Adrenal gland (tissue), 19 donors: ENCODE measurements at regions of chr7 and their contacts with region 1.

Region 1: GRCh38 chr7:70154521-70155180 is 556.4 kb downstream of the AUTS2 start:
- DNase-seq: no peak
- H3K4me3 ChIP-seq: no peak overlapping the region
- H3K27ac ChIP-seq: no peak overlapping the region
- H3K4me1 ChIP-seq: no peaks in the 10 kb centered on the region
- H3K27me3 ChIP-seq: no peaks in the 10 kb centered on the region
- CTCF ChIP-seq: no peak
- POLR2A ChIP-seq: no peak

Region 2: DNA sequence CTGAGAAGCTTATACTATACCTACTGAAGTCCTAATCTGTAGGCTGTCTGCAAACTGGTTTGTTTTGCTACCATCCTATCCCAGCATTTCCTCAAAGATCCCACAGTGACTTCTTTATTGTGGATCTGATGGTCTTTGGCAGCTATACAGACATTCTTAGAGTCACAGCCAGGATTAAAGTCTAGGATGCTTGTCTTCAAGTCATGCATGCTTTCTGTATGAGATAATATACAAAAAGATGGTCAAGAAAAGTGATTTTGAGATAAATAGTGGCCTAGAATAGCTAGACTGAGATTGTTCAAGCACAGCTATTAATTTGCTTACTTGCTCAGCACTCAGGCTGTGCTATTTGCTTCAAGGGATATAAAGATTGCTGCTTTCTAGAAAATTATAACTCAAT is 102.0 kb before region 1 on chr7:
- intact Hi-C with region 1: loop called in 1 of 2 experiments (anchors 10 kb)
- DNase-seq: no peak
- H3K4me3 ChIP-seq: no peak overlapping the region
- H3K27ac ChIP-seq: no peak overlapping the region
- H3K4me1 ChIP-seq: no peaks in the 10 kb centered on the region
- H3K27me3 ChIP-seq: no peaks in the 10 kb centered on the region
- CTCF ChIP-seq: no peak
- POLR2A ChIP-seq: no peak

Region 3: DNA sequence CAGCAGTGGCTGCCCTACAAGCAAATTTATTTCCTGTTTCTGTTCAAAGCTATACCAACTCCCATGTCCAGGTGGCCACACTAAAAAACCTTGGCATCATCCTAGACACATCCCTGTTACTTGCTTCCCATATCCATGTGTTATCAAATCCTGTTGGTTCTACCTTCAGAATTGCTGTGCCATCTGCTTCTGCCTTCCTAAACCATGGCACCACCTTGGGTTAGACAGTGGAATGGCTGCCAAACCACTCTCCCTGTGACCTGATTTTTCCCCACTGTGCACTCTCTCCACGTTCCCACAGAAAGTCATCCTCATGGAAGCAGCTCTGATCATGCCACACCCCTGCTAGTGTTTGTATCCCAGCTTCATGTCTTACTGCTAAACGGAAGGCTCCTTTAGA is 279.7 kb after region 1 on chr7:
- intact Hi-C with region 1: no loop called
- DNase-seq: no peak
- H3K4me3 ChIP-seq: no peak overlapping the region
- H3K27ac ChIP-seq: no peak overlapping the region
- H3K4me1 ChIP-seq: no peaks in the 10 kb centered on the region
- H3K27me3 ChIP-seq: no peaks in the 10 kb centered on the region
- CTCF ChIP-seq: no peak
- POLR2A ChIP-seq: no peak

Region 4: DNA sequence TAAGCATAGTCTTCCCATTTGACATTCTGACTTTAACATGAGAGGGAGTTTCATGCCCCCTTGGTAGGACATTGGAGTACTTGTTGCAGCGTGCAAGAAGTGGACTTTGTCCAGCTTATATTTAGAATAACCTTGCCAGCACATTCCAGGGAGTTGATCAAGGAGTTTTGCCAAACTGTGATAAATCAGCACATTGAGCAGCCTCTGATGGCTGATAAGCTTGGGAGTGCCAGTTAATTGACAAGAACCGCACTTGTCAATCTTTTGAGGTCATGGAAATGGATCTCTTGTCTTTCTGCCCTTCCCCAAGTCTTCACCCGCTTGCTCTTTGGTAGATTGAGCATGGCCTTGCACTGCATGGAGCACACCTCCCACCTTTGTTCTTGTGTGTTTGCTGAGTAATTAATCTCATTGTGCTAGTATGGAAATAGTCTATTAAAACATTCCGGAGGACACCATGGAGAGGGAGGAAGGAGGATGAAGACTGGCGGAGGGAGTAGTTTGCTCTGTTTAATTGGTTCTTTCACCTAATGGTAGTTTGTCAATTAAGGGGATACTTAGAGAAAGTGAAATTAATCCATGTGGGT is 308.8 kb after region 1 on chr7:
- intact Hi-C with region 1: no loop called
- DNase-seq: no peak
- H3K4me3 ChIP-seq: no peak overlapping the region
- H3K27ac ChIP-seq: no peak overlapping the region
- H3K4me1 ChIP-seq: peaks cover 0 to 3% of the 10 kb centered on the region in 2 donors
- H3K27me3 ChIP-seq: no peaks in the 10 kb centered on the region
- CTCF ChIP-seq: no peak
- POLR2A ChIP-seq: no peak